IMR-90 (cell line): ENCODE measurements at regions of chr13 and their contacts with region 1.

Region 1: DNA sequence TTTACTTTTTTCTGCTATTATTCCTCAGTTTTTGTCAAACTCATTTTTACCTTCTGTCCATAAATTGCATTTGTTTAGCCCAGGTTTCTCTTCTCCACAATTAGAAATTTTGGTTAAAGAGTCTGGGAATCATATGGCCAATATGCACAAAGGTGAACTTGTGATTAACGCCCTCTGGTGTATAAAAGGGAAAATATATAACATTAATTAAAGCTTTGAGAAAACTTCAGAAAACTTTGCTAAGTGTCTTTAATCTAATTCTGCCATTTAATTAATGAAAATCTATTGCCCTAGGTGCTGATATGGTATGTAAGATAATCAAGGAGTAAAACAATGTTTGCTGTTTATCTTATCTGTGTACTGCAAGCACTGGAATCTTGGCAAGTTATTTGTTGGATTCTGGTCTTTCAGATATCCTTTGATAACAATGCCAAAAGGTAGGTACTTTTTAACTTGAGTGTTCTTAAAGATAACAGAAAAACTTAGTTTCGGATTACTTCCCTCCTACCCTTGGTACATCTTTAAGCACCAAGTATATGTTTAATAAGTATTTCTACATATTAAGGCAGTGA is 402.6 kb downstream of the SUCLA2 start:
- DNase-seq: peak; percentile 13
- ATAC-seq: no peak
- H3K4me3 ChIP-seq: no peak overlapping the region
- H3K27ac ChIP-seq: no peak overlapping the region
- H3K4me1 ChIP-seq: no peaks in the 10 kb centered on the region; the same call in 1 of the 2 replicates
- H3K27me3 ChIP-seq: no peaks in the 10 kb centered on the region
- CTCF ChIP-seq: peak; percentile 53
- POLR2A ChIP-seq: no peak
- RAD21 ChIP-seq: peak; percentile 59

Region 2: DNA sequence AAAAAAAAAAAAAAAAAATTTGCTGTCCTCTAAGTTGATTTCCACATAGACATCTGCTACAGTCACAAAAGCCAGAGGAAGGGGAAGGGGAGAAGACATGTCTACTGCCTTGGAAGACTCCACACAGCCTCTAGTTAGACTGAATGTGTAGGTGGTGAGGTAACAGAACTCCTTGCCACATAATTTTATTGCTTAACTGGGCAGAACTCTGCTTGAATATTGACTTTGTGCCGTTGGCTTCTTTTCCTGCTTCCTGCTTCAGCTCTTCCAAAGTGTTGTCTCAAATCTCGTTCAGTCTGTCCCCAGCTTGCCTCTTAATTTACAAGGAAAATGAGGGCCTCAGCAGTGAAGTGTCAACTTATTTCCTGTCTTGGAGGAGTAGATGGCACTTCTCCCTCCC is 838.6 kb before region 1 on chr13:
- CTCF ChIA-PET with region 1: no interaction called
- POLR2A ChIA-PET with region 1: no interaction called
- dilution Hi-C with region 1: no loop called
- in situ Hi-C with region 1: no loop called
- intact Hi-C with region 1: loop called (anchors 10 kb)
- DNase-seq: no peak
- ATAC-seq: no peak
- H3K4me3 ChIP-seq: no peak overlapping the region
- H3K27ac ChIP-seq: no peak overlapping the region
- H3K4me1 ChIP-seq: no peaks in the 10 kb centered on the region; the same call in 1 of the 2 replicates
- H3K27me3 ChIP-seq: peaks cover 10% of the 10 kb centered on the region
- CTCF ChIP-seq: no peak
- POLR2A ChIP-seq: no peak
- RAD21 ChIP-seq: no peak

Region 3: GRCh38 chr13:46893798-46894560 is 704.4 kb before region 1 on chr13:
- CTCF ChIA-PET with region 1: no interaction called
- POLR2A ChIA-PET with region 1: no interaction called
- dilution Hi-C with region 1: no loop called
- in situ Hi-C with region 1: no loop called
- intact Hi-C with region 1: loop called (anchors 1 kb)
- DNase-seq: peak; percentile 17
- ATAC-seq: peak; percentile 95
- H3K4me3 ChIP-seq: peak overlapping the region; percentile 63
- H3K27ac ChIP-seq: no peak overlapping the region; the same call in 1 of the 2 replicates
- H3K4me1 ChIP-seq: no peaks in the 10 kb centered on the region
- H3K27me3 ChIP-seq: peaks cover 20% of the 10 kb centered on the region
- CTCF ChIP-seq: peak; percentile 77
- POLR2A ChIP-seq: no peak
- RAD21 ChIP-seq: peak; percentile 62

Region 4: GRCh38 chr13:46947425-46948191 is 650.8 kb before region 1 on chr13:
- CTCF ChIA-PET with region 1: no interaction called
- POLR2A ChIA-PET with region 1: no interaction called
- dilution Hi-C with region 1: no loop called
- in situ Hi-C with region 1: no loop called
- intact Hi-C with region 1: no loop called
- DNase-seq: no peak
- ATAC-seq: no peak
- H3K4me3 ChIP-seq: no peak overlapping the region
- H3K27ac ChIP-seq: no peak overlapping the region
- H3K4me1 ChIP-seq: no peaks in the 10 kb centered on the region
- H3K27me3 ChIP-seq: no peaks in the 10 kb centered on the region
- CTCF ChIP-seq: no peak
- POLR2A ChIP-seq: no peak
- RAD21 ChIP-seq: no peak

Region 5: GRCh38 chr13:47350334-47351124 is 247.9 kb before region 1 on chr13:
- CTCF ChIA-PET with region 1: no interaction called
- POLR2A ChIA-PET with region 1: no interaction called
- dilution Hi-C with region 1: no loop called
- in situ Hi-C with region 1: no loop called
- intact Hi-C with region 1: no loop called
- DNase-seq: no peak
- ATAC-seq: no peak
- H3K4me3 ChIP-seq: no peak overlapping the region
- H3K27ac ChIP-seq: no peak overlapping the region
- H3K4me1 ChIP-seq: no peaks in the 10 kb centered on the region
- H3K27me3 ChIP-seq: no peaks in the 10 kb centered on the region
- CTCF ChIP-seq: no peak
- POLR2A ChIP-seq: no peak
- RAD21 ChIP-seq: no peak

Region 6: DNA sequence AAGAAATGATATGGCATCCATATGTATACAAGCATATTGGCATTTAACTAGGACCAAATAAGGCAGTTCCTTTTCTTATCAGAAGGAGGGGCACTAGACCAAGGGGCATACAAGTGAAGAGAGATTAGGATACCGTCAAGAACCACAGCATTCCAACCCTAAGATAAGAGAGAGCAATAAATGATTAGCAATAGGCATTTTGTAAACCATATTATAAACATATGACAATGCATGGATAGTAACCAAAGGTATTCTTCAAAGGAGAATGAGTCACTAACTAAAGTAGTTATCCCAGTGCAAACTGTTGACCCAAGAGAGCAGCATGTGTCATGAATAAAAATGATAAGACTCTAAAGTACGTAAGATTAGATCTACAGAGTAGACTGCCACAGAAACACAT is 200.7 kb before region 1 on chr13:
- CTCF ChIA-PET with region 1: no interaction called
- POLR2A ChIA-PET with region 1: no interaction called
- dilution Hi-C with region 1: no loop called
- in situ Hi-C with region 1: no loop called
- intact Hi-C with region 1: loop called (anchors 5 kb)
- DNase-seq: peak; percentile 80
- ATAC-seq: peak; percentile 79
- H3K4me3 ChIP-seq: no peak overlapping the region
- H3K27ac ChIP-seq: no peak overlapping the region
- H3K4me1 ChIP-seq: no peaks in the 10 kb centered on the region; the same call in 1 of the 2 replicates
- H3K27me3 ChIP-seq: no peaks in the 10 kb centered on the region
- CTCF ChIP-seq: peak; percentile 37
- POLR2A ChIP-seq: no peak
- RAD21 ChIP-seq: peak; percentile 59

Region 7: DNA sequence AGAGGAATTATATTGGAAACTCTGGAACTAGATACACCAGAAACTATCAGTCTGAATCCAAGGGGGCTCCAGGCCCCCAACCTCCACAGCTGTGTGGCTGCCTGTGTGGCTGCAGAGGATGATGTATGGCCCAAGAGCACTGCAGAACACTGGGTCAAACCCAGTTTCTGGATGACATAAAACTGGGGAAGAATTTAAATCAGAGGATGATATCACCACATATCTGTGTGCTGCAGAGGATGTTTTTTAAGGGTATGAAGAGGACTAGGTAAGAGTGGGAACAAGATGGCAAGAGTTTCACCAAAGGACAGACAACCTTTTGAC is 176.2 kb after region 1 on chr13:
- CTCF ChIA-PET with region 1: no interaction called
- POLR2A ChIA-PET with region 1: no interaction called
- dilution Hi-C with region 1: no loop called
- in situ Hi-C with region 1: no loop called
- intact Hi-C with region 1: loop called (anchors 10 kb)
- DNase-seq: no peak
- ATAC-seq: no peak
- H3K4me3 ChIP-seq: no peak overlapping the region
- H3K27ac ChIP-seq: no peak overlapping the region
- H3K4me1 ChIP-seq: no peaks in the 10 kb centered on the region
- H3K27me3 ChIP-seq: no peaks in the 10 kb centered on the region; the same call in 1 of the 2 replicates
- CTCF ChIP-seq: no peak
- POLR2A ChIP-seq: no peak
- RAD21 ChIP-seq: no peak